ENCODE measurements at regions of chr5 and their contacts with region 1.

Region 1: DNA sequence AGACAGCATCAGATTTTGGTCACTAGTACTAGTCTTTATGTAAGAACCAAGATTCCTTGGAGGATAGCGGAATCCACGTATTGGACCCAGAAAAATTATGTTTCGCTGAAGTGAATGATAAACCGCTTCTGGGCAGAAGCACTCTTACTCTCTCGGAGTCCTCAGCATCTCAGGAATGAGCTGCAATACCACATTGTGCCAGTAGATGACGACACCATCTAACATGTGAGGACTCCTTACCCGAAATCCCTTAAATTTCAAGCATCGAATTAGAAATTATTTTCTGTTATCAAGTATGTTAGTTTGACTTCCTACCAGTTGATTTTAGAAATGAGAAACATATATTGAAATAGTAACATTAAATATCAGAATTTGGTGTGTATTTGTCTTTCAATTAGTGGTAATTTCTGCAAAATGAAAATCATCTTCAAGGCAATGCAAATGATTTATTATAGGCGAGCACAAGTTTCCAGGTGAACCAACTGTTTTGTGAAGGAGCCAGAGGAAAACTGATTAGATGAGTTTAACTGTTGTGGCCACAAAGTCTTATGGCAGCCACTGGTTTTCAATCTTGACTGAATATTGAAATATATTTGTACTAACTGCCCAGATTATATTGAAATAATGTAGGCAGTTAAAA is 66.0 kb upstream of the CAMK4 start:
- DNase-seq: peak; percentile 60 to 90 (median 76)
- ATAC-seq: peak; percentile 88
- H3K4me3 ChIP-seq: no peak overlapping the region
- H3K4me3 Mint-ChIP-seq: no peak overlapping the region
- H3K27ac ChIP-seq: no peak overlapping the region
- H3K27ac Mint-ChIP-seq: no peak overlapping the region
- H3K4me1 ChIP-seq: no peaks in the 10 kb centered on the region
- H3K4me1 Mint-ChIP-seq: peaks cover 11% of the 10 kb centered on the region
- H3K27me3 ChIP-seq: no peaks in the 10 kb centered on the region
- H3K27me3 Mint-ChIP-seq: no peaks in the 10 kb centered on the region
- CTCF ChIP-seq: peak; percentile 100

Region 2: DNA sequence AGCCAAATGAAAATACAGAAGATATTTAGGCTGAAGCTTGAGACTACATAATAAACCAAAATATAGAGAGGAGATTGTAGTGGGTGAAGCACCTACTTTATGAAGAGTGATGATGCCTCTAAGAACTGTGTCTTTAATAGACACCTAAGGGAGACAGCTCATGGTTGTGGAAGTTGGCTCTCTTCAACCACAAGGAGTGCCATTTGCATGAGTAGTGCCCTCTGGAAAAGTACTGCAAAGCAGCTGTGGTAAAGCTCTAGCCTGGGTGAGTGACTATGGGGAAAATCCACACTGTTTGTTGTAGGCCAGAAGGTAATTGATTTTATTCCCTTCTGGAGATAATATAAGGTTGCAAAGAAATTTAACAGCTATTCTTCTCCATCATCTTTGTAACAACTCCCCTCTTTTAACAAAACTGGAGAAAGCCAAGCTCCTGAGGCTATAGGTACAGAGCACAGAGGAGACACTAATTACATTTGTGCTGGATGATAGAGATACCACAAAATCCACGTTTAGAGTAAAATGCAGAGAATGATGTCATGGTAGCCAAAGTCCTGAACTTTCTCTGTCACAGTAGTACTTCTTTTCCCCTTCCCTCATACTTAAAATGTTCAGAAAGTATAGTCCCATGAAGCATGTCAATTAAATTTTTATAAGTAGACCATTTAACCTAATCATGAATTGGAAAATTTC is 231.3 kb after region 1 on chr5:
- CTCF ChIA-PET with region 1: interaction called, 3 read pairs
- POLR2A ChIA-PET with region 1: no interaction called
- intact Hi-C with region 1: loop called in 1 of 2 experiments (anchors 10 kb)
- DNase-seq: no peak
- ATAC-seq: no peak
- H3K4me3 ChIP-seq: no peak overlapping the region
- H3K4me3 Mint-ChIP-seq: no peak overlapping the region
- H3K27ac ChIP-seq: no peak overlapping the region
- H3K27ac Mint-ChIP-seq: no peak overlapping the region
- H3K4me1 ChIP-seq: no peaks in the 10 kb centered on the region
- H3K4me1 Mint-ChIP-seq: peaks cover 22% of the 10 kb centered on the region
- H3K27me3 ChIP-seq: no peaks in the 10 kb centered on the region
- H3K27me3 Mint-ChIP-seq: no peaks in the 10 kb centered on the region
- CTCF ChIP-seq: no peak

Region 3: DNA sequence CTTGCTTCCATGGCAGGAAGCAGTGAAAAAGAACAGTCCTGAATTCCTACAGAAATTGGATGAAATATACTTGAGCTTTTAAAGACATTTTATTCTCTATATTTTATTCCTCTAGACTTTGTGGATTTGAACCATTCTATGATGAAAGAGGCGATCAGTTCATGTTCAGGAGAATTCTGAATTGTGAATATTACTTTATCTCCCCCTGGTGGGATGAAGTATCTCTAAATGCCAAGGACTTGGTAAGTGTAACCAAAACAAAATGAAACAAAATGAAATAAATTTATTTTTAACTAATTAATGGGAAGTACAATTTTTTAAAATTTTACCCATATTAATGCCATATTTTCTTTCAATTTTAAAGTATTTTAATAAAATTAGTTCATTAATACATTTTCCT is 320.0 kb after region 1 on chr5:
- CTCF ChIA-PET with region 1: interaction called, 3 read pairs
- POLR2A ChIA-PET with region 1: no interaction called
- intact Hi-C with region 1: loop called (anchors 1 to 5 kb)
- DNase-seq: no peak
- ATAC-seq: no peak
- H3K4me3 ChIP-seq: no peak overlapping the region
- H3K4me3 Mint-ChIP-seq: no peak overlapping the region
- H3K27ac ChIP-seq: no peak overlapping the region
- H3K27ac Mint-ChIP-seq: no peak overlapping the region
- H3K4me1 ChIP-seq: no peaks in the 10 kb centered on the region
- H3K4me1 Mint-ChIP-seq: no peaks in the 10 kb centered on the region
- H3K27me3 ChIP-seq: no peaks in the 10 kb centered on the region
- H3K27me3 Mint-ChIP-seq: no peaks in the 10 kb centered on the region
- CTCF ChIP-seq: no peak

Region 4: GRCh38 chr5:111550279-111551020 is 392.2 kb after region 1 on chr5:
- CTCF ChIA-PET with region 1: no interaction called
- POLR2A ChIA-PET with region 1: no interaction called
- intact Hi-C with region 1: loop called in 1 of 2 experiments (anchors 2 kb)
- DNase-seq: peak; percentile 37 to 83 (median 57)
- ATAC-seq: peak; percentile 90
- H3K4me3 ChIP-seq: no peak overlapping the region
- H3K4me3 Mint-ChIP-seq: no peak overlapping the region
- H3K27ac ChIP-seq: no peak overlapping the region
- H3K27ac Mint-ChIP-seq: no peak overlapping the region
- H3K4me1 ChIP-seq: peaks cover 9% of the 10 kb centered on the region
- H3K4me1 Mint-ChIP-seq: peaks cover 21% of the 10 kb centered on the region
- H3K27me3 ChIP-seq: no peaks in the 10 kb centered on the region
- H3K27me3 Mint-ChIP-seq: peaks cover 3% of the 10 kb centered on the region
- CTCF ChIP-seq: peak; percentile 68

Region 5: GRCh38 chr5:112146323-112147226 is 988.4 kb after region 1 on chr5:
- CTCF ChIA-PET with region 1: no interaction called
- POLR2A ChIA-PET with region 1: no interaction called
- intact Hi-C with region 1: loop called (anchors 1 to 2 kb)
- DNase-seq: peak; percentile 14 to 81 (median 40)
- ATAC-seq: peak; percentile 94
- H3K4me3 ChIP-seq: no peak overlapping the region
- H3K4me3 Mint-ChIP-seq: no peak overlapping the region
- H3K27ac ChIP-seq: no peak overlapping the region
- H3K27ac Mint-ChIP-seq: no peak overlapping the region
- H3K4me1 ChIP-seq: no peaks in the 10 kb centered on the region
- H3K4me1 Mint-ChIP-seq: no peaks in the 10 kb centered on the region
- H3K27me3 ChIP-seq: peaks cover 0 to under 1% of the 10 kb centered on the region in 2 experiments
- H3K27me3 Mint-ChIP-seq: peaks cover 7% of the 10 kb centered on the region
- CTCF ChIP-seq: peak; percentile 84

Measured in CD4-positive, alpha-beta T cell (primary cell).